Activated CD4-positive, alpha-beta memory T cell treated with anti-CD3 and anti-CD28 coated beads for 36 hours (primary cell): ENCODE measurements at regions of chr16 and their contacts with region 1.

Region 1: GRCh38 chr16:22240023-22240710 is 34.1 kb downstream of the EEF2K start:
- DNase-seq: no peak
- H3K4me3 Mint-ChIP-seq: no peak overlapping the region
- H3K27ac Mint-ChIP-seq: peak overlapping the region; percentile 80
- H3K4me1 Mint-ChIP-seq: peaks cover 21% of the 10 kb centered on the region
- H3K27me3 Mint-ChIP-seq: no peaks in the 10 kb centered on the region

Region 2: GRCh38 chr16:22174642-22175041 is 65.5 kb before region 1 on chr16:
- CTCF ChIA-PET with region 1: no interaction called
- POLR2A ChIA-PET with region 1: no interaction called
- intact Hi-C with region 1: no loop called
- DNase-seq: no peak
- H3K4me3 Mint-ChIP-seq: no peak overlapping the region
- H3K27ac Mint-ChIP-seq: no peak overlapping the region
- H3K4me1 Mint-ChIP-seq: no peaks in the 10 kb centered on the region
- H3K27me3 Mint-ChIP-seq: no peaks in the 10 kb centered on the region

Region 3: DNA sequence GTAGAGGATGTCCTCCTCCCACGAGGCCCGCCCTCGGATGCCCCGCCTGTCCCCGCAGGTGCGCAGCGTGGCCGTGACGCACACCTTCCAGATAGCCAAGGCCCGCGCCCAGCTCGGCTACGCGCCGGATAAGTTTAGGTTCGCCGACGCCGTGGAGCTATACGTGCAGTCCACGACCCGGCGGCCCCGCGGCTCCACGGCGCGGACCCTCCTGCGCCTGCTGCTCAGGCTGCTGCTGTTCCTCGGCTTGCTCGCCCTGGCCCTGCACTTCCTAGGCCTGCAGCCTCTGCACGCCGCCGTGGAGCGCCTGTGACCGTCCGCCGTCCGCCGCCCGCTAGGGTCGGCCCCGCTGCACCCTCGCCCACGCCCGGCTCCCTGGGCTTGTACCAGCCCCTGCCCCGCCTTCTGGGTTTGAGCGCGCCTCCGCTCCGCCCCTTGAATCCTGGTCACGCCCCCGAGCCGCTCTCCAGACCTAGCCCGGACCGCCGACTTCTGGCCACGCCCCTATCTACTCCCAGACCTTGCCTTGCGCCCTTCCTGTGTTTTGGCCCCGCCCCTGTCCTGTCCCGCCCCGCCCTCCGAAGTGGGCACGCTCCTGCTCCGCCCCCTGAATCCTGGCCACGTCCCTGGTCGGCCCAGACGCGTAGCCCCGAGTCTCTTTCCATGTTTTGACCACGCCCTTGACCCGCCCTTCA is 49.9 kb before region 1 on chr16:
- CTCF ChIA-PET with region 1: no interaction called
- POLR2A ChIA-PET with region 1: no interaction called
- intact Hi-C with region 1: no loop called
- DNase-seq: peak; percentile 95
- H3K4me3 Mint-ChIP-seq: peak overlapping the region; percentile 91
- H3K27ac Mint-ChIP-seq: peak overlapping the region; percentile 99
- H3K4me1 Mint-ChIP-seq: peaks cover 53% of the 10 kb centered on the region
- H3K27me3 Mint-ChIP-seq: no peaks in the 10 kb centered on the region

Region 4: GRCh38 chr16:22206013-22206841 is 33.9 kb before region 1 on chr16 and contains the start of gene EEF2K:
- CTCF ChIA-PET with region 1: interaction called, 5 read pairs
- POLR2A ChIA-PET with region 1: no interaction called
- intact Hi-C with region 1: loop called (anchors 2 kb)
- DNase-seq: peak; percentile 93
- H3K4me3 Mint-ChIP-seq: peak within 1 kb of the TSS; percentile 95
- H3K27ac Mint-ChIP-seq: peak within 1 kb of the TSS; percentile 87
- H3K4me1 Mint-ChIP-seq: peaks cover 30% of the 10 kb centered on the region
- H3K27me3 Mint-ChIP-seq: no peaks in the 10 kb centered on the region
- total RNA-seq, gene EEF2K: 23.0 to 24.1 TPM